ENCODE measurements at regions of chr21 and their contacts with region 1.

Region 1: GRCh38 chr21:25925936-25926335 is 191.2 kb downstream of the GABPA start:
- DNase-seq: peak in 1 of 2 donors; percentile 64
- ATAC-seq: peak; percentile 86 to 95 (median 90)
- H3K4me3 ChIP-seq: no peak overlapping the region
- H3K27ac ChIP-seq: peak overlapping the region; percentile 20 to 91 (median 63)
- H3K4me1 ChIP-seq: peaks cover 8 to 63% (median 31%) of the 10 kb centered on the region in 9 donors
- H3K27me3 ChIP-seq: no peaks in the 10 kb centered on the region
- CTCF ChIP-seq: no peak

Region 2: DNA sequence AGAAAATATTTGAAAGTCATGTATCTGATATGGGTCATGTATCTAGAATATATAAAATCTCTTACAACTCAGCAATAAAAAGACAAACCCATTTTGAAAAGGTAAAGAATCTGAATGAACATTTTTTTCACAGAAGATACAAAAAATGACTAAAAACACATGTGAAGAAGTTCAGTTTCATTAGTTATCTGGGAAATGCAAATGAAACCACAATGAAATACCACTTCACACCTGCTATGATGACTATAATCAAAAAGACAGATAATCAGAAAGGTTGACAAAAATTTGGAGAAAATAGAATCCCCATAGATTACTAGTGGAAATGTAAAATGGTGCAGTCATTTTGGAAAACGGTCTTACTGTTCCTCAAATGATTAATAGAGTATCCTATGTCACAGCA is 949.7 kb before region 1 on chr21:
- intact Hi-C with region 1: no loop called
- DNase-seq: no peak
- ATAC-seq: no peak
- H3K4me3 ChIP-seq: no peak overlapping the region
- H3K27ac ChIP-seq: no peak overlapping the region
- H3K4me1 ChIP-seq: no peaks in the 10 kb centered on the region
- H3K27me3 ChIP-seq: no peaks in the 10 kb centered on the region
- CTCF ChIP-seq: no peak

Region 3: DNA sequence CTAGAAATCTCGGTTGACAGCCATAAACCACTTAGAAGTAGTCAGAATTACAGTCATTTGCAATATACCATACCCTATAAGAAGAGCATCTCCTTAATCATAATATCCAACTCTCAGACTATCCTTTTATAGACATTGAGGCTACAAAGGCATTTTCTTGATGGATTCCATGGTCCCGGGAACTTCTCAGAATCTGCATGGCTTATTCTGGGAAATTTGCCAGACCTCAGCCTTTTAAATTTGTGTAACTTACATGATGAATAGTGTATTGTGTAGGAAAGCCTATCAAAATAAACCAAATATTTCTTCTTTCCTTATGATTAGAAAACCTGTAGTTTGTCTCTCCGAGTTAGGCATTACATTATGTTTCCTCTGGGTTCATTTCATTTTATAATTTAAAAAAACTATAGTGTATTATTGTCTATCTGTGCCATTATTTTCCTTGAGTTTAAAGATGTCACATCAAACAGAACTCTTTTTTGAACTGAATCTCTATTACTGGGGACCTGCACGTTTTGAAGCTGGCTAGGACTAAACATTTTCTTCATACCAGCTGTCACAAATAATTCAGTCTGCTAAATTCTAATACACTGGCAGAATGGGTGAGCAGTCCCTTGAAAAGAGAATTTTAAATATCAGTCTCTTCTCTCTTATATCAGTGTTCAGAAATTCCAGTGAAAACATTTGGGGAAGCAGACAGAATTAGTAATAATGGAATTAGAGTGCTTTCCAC is 88.2 kb before region 1 on chr21:
- intact Hi-C with region 1: no loop called
- DNase-seq: no peak
- ATAC-seq: no peak
- H3K4me3 ChIP-seq: no peak overlapping the region
- H3K27ac ChIP-seq: no peak overlapping the region
- H3K4me1 ChIP-seq: no peaks in the 10 kb centered on the region
- H3K27me3 ChIP-seq: peaks cover 0 to 4% (median 0%) of the 10 kb centered on the region in 7 donors
- CTCF ChIP-seq: no peak

Region 4: GRCh38 chr21:25967573-25968438 is 41.9 kb after region 1 on chr21:
- intact Hi-C with region 1: no loop called
- DNase-seq: no peak
- ATAC-seq: peak; percentile 45 to 70 (median 64)
- H3K4me3 ChIP-seq: no peak overlapping the region
- H3K27ac ChIP-seq: peak overlapping the region in 8 of 10 donors; percentile 9 to 83 (median 54)
- H3K4me1 ChIP-seq: peaks cover 0 to 67% (median 25%) of the 10 kb centered on the region in 9 donors
- H3K27me3 ChIP-seq: no peaks in the 10 kb centered on the region
- CTCF ChIP-seq: no peak

Region 5: GRCh38 chr21:25983745-25984144 is 57.8 kb after region 1 on chr21:
- intact Hi-C with region 1: loop called in 1 of 10 experiments (anchors 5 kb)
- DNase-seq: peak in 1 of 2 donors; percentile 34
- ATAC-seq: peak; percentile 67 to 94 (median 88)
- H3K4me3 ChIP-seq: peak overlapping the region in 2 of 10 donors; percentile 6 to 14
- H3K27ac ChIP-seq: peak overlapping the region in 8 of 10 donors; percentile 9 to 67 (median 53)
- H3K4me1 ChIP-seq: peaks cover 0 to 49% (median 31%) of the 10 kb centered on the region in 9 donors
- H3K27me3 ChIP-seq: no peaks in the 10 kb centered on the region
- CTCF ChIP-seq: no peak

Region 6: DNA sequence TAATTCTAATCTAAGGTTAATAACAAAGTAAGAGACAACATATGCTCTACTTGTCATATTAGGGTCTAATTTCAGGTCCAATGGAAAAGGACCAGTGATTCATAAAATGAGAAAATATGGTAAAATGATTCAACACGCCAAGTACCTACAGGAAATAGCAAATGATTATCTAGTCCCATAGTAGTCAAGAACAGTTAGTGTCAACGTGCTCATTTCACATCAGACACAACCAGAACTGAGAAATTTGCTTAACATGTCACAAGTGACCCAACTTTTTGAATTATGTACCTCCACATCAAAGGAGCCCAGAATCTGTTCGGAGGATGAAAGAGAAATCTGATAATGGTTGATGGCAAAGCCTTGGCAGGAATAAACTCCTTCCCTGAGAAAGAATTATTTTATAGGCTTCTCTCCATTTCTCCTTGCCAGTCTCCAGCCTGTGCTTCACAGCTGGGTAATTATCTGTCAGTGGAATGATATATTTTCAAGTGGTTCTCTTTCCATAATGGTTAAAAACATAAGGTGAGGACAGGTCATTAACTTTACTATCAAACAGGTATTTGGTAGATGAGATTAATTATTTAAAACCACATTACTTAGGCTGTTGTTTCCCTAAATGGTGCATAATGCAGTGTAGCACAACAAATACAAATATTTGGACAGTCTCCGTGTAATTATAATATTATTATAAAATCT is 161.4 kb after region 1 on chr21:
- intact Hi-C with region 1: no loop called
- DNase-seq: no peak
- ATAC-seq: no peak
- H3K4me3 ChIP-seq: no peak overlapping the region
- H3K27ac ChIP-seq: no peak overlapping the region
- H3K4me1 ChIP-seq: peaks cover 0 to 42% (median 8%) of the 10 kb centered on the region in 9 donors
- H3K27me3 ChIP-seq: no peaks in the 10 kb centered on the region
- CTCF ChIP-seq: no peak

Measured in heart right ventricle (tissue), 16 donors.